ENCODE measurements at regions of chr1 and their contacts with region 1.

Region 1: GRCh38 chr1:173134029-173134428 is 73.1 kb downstream of the TNFSF4 start:
- DNase-seq: no peak
- H3K4me3 Mint-ChIP-seq: no peak overlapping the region
- H3K27ac Mint-ChIP-seq: no peak overlapping the region
- H3K4me1 Mint-ChIP-seq: no peaks in the 10 kb centered on the region
- H3K27me3 Mint-ChIP-seq: peaks cover 6% of the 10 kb centered on the region

Region 2: GRCh38 chr1:173112129-173112528 is 21.9 kb before region 1 on chr1:
- intact Hi-C with region 1: no loop called
- DNase-seq: no peak
- H3K4me3 Mint-ChIP-seq: no peak overlapping the region
- H3K27ac Mint-ChIP-seq: no peak overlapping the region
- H3K4me1 Mint-ChIP-seq: no peaks in the 10 kb centered on the region
- H3K27me3 Mint-ChIP-seq: no peaks in the 10 kb centered on the region

Region 3: GRCh38 chr1:173148971-173149370 is 14.9 kb after region 1 on chr1:
- intact Hi-C with region 1: loop called (anchors 1 kb)
- DNase-seq: no peak
- H3K4me3 Mint-ChIP-seq: no peak overlapping the region
- H3K27ac Mint-ChIP-seq: no peak overlapping the region
- H3K4me1 Mint-ChIP-seq: peaks cover 11% of the 10 kb centered on the region
- H3K27me3 Mint-ChIP-seq: peaks cover 12% of the 10 kb centered on the region

Measured in activated T-helper 2 cell treated with anti-CD3 and anti-CD28 coated beads, Interferon-gamma antibody, Interleukin-2, Interleukin-4, amounts not matched to agents 10 μg/mL and 5 μg/mL and 100 μg/mL, durations not matched to agents 14 hours and 24 hours and 36 hours (primary cell).